ENCODE measurements at regions of chr7 and their contacts with region 1.

Region 1: GRCh38 chr7:40918701-40919271 is 784.0 kb downstream of the SUGCT start:
- DNase-seq: no peak
- H3K4me3 ChIP-seq: no peak overlapping the region
- H3K27ac ChIP-seq: no peak overlapping the region
- H3K4me1 ChIP-seq: no peaks in the 10 kb centered on the region
- H3K27me3 ChIP-seq: no peaks in the 10 kb centered on the region
- CTCF ChIP-seq: no peak
- POLR2A ChIP-seq: no peak

Region 2: GRCh38 chr7:40777748-40778312 is 141.0 kb before region 1 on chr7:
- intact Hi-C with region 1: loop called (anchors 10 kb)
- DNase-seq: no peak
- H3K4me3 ChIP-seq: no peak overlapping the region
- H3K27ac ChIP-seq: no peak overlapping the region
- H3K4me1 ChIP-seq: no peaks in the 10 kb centered on the region
- H3K27me3 ChIP-seq: no peaks in the 10 kb centered on the region
- CTCF ChIP-seq: no peak
- POLR2A ChIP-seq: no peak

Region 3: DNA sequence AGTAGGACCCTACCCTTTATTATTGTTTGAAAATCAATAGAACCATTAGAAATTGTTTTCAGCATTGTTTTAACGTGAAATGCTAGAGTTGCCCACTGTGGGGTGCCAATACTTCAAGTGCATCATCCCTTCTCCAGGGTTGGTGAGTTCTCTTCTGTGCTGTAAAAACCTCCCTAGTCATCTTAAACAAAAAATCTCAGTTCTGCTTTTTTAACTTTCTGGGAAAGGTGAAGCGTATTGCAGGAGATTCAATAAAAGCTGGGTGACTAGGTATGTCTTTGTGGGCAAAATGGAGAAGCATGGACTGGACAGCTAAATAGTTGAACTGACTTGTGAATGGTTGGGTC is 84.9 kb before region 1 on chr7:
- intact Hi-C with region 1: no loop called
- DNase-seq: no peak
- H3K4me3 ChIP-seq: no peak overlapping the region
- H3K27ac ChIP-seq: no peak overlapping the region
- H3K4me1 ChIP-seq: no peaks in the 10 kb centered on the region
- H3K27me3 ChIP-seq: no peaks in the 10 kb centered on the region
- CTCF ChIP-seq: no peak
- POLR2A ChIP-seq: no peak

Measured in prostate gland (tissue), 2 donors.